Activated T-helper 2 cell treated with anti-CD3 and anti-CD28 coated beads, Interferon-gamma antibody, Interleukin-2, Interleukin-4, amounts not matched to agents 10 μg/mL and 5 μg/mL and 100 μg/mL, durations not matched to agents 14 hours and 24 hours and 36 hours (primary cell): ENCODE measurements at regions of chr19 and their contacts with region 1.

Region 1: GRCh38 chr19:42132851-42133528 is 744 bp upstream of the POU2F2 start:
- DNase-seq: peak; percentile 81
- H3K4me3 Mint-ChIP-seq: peak overlapping the region; percentile 92
- H3K27ac Mint-ChIP-seq: peak overlapping the region; percentile 91
- H3K4me1 Mint-ChIP-seq: peaks cover 46% of the 10 kb centered on the region
- H3K27me3 Mint-ChIP-seq: no peaks in the 10 kb centered on the region

Region 2: DNA sequence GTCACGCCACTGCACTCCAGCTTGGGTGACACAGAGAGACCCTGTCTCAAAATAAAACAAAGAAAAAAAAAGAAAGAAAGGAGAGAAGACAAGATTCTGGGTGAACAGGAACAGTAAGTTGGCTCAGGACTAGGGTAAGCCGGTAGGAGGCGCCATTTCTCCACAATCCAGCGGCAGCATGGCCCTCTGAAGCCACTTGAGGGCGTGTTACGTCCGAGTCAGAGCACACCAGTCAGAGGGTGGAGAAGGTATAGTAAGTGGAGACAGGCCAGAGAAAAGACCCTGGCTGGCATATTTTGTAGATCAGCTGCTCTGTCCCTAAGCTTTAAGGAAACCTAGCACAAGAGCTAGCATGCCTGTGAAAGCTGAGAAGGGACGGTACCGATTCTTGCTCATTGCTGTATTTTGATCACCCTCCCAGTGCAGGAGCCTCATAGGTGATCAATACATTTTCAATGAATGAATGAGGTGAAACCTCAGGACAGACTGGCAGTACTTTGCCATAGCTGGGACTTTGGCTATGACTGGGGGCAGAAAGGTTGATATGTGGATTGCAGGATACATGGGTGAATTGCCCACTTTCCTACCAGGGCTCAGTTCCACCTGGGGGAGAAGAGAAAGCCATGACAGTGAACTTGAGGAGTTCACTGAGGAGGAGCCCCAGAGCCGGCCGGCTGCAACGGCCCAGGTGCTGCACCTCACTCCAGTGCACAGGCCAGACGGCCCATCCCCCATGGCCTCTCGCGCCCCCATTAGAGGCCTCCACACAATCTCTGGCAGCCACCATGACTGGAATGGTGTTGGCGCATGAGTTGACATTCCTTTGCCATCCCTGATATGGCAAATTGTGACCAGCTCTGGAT is 24.2 kb before region 1 on chr19:
- intact Hi-C with region 1: loop called (anchors 1 kb)
- DNase-seq: peak; percentile 82
- H3K4me3 Mint-ChIP-seq: no peak overlapping the region
- H3K27ac Mint-ChIP-seq: peak overlapping the region; percentile 8
- H3K4me1 Mint-ChIP-seq: peaks cover 35% of the 10 kb centered on the region
- H3K27me3 Mint-ChIP-seq: no peaks in the 10 kb centered on the region

Region 3: GRCh38 chr19:42176990-42177685 is 44.1 kb after region 1 on chr19:
- intact Hi-C with region 1: loop called (anchors 2 kb)
- DNase-seq: peak; percentile 73
- H3K4me3 Mint-ChIP-seq: no peak overlapping the region
- H3K27ac Mint-ChIP-seq: no peak overlapping the region
- H3K4me1 Mint-ChIP-seq: peaks cover 7% of the 10 kb centered on the region
- H3K27me3 Mint-ChIP-seq: peaks cover 39% of the 10 kb centered on the region

Region 4: DNA sequence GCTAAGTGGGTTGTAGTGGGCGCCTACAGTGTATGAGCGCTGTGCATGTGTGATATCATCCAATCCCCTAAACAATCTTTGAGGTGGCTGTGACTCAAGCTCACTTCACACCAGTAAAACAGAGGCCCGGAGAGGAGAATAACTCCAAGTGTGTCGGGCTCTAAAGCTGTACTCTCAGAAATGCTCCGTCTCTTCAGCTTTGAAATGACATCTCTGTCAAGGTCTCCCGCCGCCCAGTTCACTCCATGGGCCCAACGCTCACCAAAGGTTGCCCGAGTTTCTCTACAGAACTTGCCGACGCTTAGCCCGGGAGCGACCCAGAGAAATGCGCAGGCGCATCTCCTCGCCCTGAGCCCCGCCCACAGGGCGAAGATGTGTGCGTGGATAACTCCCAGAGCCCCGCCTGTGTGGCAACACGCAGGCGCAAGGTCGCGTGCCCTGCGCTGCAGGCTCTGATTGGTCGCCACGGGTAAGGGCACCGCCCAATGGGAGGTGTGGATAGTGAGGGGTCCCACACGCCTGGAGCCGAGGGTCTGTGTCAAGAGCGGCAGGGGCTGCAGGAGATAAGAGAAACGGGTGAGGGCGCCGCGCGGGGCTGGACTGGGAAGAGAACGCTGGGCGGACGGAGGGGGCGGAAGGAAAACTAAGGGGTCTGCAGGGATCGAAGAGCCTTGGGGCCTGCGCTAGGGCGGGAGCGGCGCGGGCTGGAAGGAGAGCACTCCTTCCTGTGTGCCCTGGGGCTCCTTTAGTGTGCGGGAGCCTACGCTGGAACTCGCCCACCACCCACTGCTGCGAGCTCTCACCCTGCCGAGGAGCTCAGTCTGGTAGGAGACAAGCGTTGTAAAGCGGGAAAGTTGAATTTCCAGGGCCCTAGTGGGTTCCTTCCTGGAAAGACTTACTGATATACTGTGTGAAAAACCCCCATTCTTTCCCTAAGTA is 87.1 kb after region 1 on chr19 and contains the start of gene ZNF526:
- intact Hi-C with region 1: loop called (anchors 1 kb)
- DNase-seq: peak; percentile 98
- H3K4me3 Mint-ChIP-seq: peak within 1 kb of the TSS; percentile 99
- H3K27ac Mint-ChIP-seq: peak within 1 kb of the TSS; percentile 95
- H3K4me1 Mint-ChIP-seq: peaks cover 33% of the 10 kb centered on the region
- H3K27me3 Mint-ChIP-seq: no peaks in the 10 kb centered on the region
- total RNA-seq, gene ZNF526: 17.3 and 18.4 TPM in 2 replicates

Region 5: GRCh38 chr19:42283143-42284065 is 150.4 kb after region 1 on chr19:
- intact Hi-C with region 1: loop called (anchors 2 kb)
- DNase-seq: peak; percentile 91
- H3K4me3 Mint-ChIP-seq: no peak overlapping the region
- H3K27ac Mint-ChIP-seq: no peak overlapping the region
- H3K4me1 Mint-ChIP-seq: peaks cover 39% of the 10 kb centered on the region
- H3K27me3 Mint-ChIP-seq: no peaks in the 10 kb centered on the region

Region 6: GRCh38 chr19:42325273-42325895 is 192.4 kb after region 1 on chr19 and contains the start of gene MEGF8:
- intact Hi-C with region 1: loop called (anchors 1 kb)
- DNase-seq: peak; percentile 98
- H3K4me3 Mint-ChIP-seq: peak within 1 kb of the TSS; percentile 87
- H3K27ac Mint-ChIP-seq: peak within 1 kb of the TSS; percentile 73
- H3K4me1 Mint-ChIP-seq: peaks cover 12% of the 10 kb centered on the region
- H3K27me3 Mint-ChIP-seq: peaks cover 25% of the 10 kb centered on the region
- total RNA-seq, gene MEGF8: 9.7 and 10.3 TPM in 2 replicates